K562 (cell line): ENCODE measurements at regions of chr16 and their contacts with region 1.

Region 1: DNA sequence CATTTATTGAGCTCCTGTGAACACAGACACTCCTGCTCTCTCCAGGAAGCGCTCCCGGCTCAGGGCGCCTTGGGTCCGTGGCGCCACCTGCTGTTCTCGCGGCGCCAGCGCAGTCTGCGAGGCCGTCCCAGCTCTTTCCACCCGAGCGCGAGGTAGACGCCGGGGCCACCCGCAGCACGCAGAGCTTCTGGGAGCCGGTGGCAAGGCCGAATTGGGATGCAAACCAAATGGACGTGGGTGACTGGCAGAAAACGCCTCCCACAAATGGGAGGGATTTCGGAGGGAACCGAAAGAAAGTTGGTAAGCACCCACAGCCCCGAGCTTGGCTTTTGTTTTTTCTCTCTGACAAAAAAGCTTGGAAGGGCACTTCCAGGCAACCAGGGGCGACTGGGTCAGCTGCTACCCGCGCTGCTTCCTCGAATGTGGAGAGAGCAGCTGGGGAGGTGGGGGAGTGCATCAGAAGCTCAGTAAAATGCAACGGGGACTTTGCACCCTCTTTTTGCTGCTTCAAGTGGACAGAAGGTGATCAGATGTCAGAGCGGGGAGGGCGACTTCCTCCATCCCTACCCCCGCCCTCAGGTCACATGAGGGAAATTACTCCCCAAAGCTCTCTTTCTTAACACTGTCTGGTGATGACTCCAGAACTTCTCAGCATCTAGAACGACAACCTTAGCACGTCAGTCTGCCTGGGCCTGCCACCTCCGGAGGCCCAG is 13.5 kb upstream of the N4BP1 start:
- DNase-seq: peak; percentile 81 to 86 (median 84)
- ATAC-seq: peak; percentile 99
- H3K4me3 ChIP-seq: peak overlapping the region; percentile 37
- H3K27ac ChIP-seq: no peak overlapping the region
- H3K4me1 ChIP-seq: peaks cover 0 to 16% of the 10 kb centered on the region in 2 experiments; a peak in 3 of 5 replicates
- H3K27me3 ChIP-seq: peaks cover 1 to 4% of the 10 kb centered on the region in 2 experiments; a peak in 3 of 5 replicates
- CTCF ChIP-seq: peak; percentile 94 to 97 (median 94)
- EP300 ChIP-seq: no peak
- POLR2A ChIP-seq: no peak
- RAD21 ChIP-seq: peak; percentile 84 to 94

Region 2: DNA sequence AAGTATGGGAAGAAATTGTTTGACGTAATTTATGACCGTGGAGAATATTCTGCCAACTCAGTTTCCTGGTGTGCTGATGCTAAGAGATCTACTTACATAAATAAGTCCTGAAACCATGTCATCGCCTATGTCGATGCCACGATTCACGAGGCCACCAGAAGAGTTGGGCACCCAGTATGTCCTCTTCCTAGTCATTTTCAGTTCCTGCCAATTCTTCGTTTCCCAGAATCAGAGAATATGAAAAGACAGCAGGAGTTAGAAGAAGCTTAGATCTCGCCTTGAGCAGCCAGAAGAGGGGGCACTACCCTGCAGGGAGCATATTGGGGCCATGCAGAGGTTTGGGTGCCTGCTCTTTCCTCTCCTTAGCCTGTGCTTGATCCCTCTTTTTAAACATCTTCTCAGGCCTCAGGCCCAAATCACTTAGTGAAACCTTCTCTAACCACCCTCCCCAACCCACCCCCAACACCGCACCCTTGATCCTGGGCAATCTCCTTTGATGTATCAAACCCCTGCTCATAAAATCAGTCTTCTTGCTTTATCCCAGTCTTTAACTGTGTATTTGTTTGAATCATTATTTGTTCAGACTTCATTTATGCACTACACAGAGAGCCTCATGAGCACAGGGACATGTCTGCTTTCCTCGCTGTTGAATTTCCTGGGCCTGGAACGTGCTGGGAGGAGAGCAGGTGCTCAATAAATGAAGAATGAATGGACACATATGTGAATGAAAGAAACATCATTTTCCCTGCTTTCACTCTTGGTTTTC is 391.6 kb before region 1 on chr16:
- CTCF ChIA-PET with region 1: no interaction called
- POLR2A ChIA-PET with region 1: no interaction called
- in situ Hi-C with region 1: loop called (anchors 10 kb)
- intact Hi-C with region 1: loop called (anchors 5 kb)
- DNase-seq: peak in 2 of 4 experiments; percentile 25 to 46
- ATAC-seq: peak; percentile 95
- H3K4me3 ChIP-seq: no peak overlapping the region
- H3K27ac ChIP-seq: no peak overlapping the region
- H3K4me1 ChIP-seq: no peaks in the 10 kb centered on the region
- H3K27me3 ChIP-seq: peaks cover 12 to 24% of the 10 kb centered on the region in 2 experiments
- CTCF ChIP-seq: peak; percentile 57 to 70 (median 59)
- EP300 ChIP-seq: no peak
- POLR2A ChIP-seq: no peak
- RAD21 ChIP-seq: peak; percentile 28 to 64; a peak in 2 of 4 replicates

Region 3: DNA sequence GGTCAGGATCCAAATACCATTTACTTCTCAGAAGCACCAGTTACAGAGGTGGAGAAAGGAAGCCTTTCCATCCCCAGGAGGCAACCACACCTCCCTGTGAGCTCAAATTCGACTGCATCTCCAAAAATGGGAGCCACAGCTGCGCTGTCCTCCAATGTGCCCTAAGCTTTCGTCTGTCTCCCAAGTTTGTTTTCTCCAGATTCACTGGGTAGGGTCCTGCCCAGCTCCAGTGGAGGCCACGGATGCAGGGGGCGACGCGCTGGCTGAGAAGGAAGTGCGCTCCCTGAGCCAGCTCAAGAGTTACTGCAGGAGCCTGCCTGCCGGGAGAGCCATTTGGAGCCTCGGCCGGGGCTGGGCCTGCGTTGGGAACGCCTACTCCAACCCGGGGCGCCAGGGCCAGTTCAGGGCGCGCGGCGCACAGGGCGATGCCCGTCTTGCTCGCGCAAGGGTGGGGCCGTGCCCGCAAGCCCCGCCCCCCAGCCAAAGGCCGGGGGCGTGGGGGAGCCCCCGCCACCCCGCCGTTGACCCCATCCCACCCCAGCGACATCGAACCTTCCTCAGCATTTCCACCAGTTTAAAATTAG is 257.8 kb before region 1 on chr16:
- CTCF ChIA-PET with region 1: no interaction called
- POLR2A ChIA-PET with region 1: interaction called, 3 read pairs
- in situ Hi-C with region 1: no loop called
- intact Hi-C with region 1: loop called (anchors 5 kb)
- DNase-seq: peak; percentile 86 to 93 (median 89)
- ATAC-seq: peak; percentile 98
- H3K4me3 ChIP-seq: peak overlapping the region; percentile 50
- H3K27ac ChIP-seq: peak overlapping the region; percentile 80
- H3K4me1 ChIP-seq: peaks cover 16 to 31% of the 10 kb centered on the region in 2 experiments
- H3K27me3 ChIP-seq: no peaks in the 10 kb centered on the region
- CTCF ChIP-seq: peak; percentile 14 to 27 (median 20); a peak in 2 of 6 replicates
- EP300 ChIP-seq: no peak
- POLR2A ChIP-seq: peak; percentile 80
- RAD21 ChIP-seq: no peak

Region 4: DNA sequence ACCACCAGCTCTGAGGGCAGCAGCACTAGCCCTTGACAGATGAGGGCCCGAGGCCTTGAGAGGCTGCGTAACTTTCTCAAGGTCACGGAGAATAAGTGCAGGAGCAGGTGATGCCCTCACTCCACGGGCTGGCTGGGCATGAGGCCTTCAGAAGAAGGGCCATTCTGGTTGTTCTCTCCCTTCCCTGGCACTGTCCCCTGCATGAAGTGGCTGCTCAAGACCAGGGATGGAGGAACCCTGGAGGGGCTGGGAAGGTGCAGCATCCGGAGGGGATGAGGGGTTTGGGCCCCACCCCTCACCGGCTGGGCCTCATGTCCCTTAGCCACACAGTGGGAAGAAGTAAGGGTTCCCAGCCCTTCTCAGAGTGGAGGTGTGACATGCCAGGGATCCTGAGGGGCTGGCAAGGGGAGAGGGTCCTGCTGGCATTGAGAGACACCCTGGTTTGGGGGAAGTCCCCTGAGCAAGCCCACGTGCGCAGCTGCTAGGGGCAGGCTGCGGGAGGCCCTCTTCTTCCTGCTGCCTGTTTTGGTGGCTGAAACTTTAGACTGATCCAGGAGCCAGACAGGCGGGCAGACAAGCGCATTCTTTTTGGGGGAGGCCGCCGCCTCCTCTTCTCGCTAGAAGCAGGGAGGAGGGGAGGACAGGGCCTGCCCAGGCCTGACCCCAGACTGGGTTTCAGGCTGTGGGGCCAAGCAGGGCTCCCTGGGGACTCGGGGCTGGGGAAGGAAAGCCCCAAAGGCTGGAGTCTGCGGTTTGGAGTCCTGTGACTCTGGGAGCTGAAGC is 87.4 kb before region 1 on chr16:
- CTCF ChIA-PET with region 1: interaction called, 3 read pairs
- POLR2A ChIA-PET with region 1: no interaction called
- in situ Hi-C with region 1: no loop called
- intact Hi-C with region 1: loop called (anchors 1 kb)
- DNase-seq: no peak
- ATAC-seq: no peak
- H3K4me3 ChIP-seq: no peak overlapping the region
- H3K27ac ChIP-seq: no peak overlapping the region
- H3K4me1 ChIP-seq: peaks cover 0 to 4% of the 10 kb centered on the region in 2 experiments; a peak in 2 of 5 replicates
- H3K27me3 ChIP-seq: peaks cover 3 to 13% of the 10 kb centered on the region in 2 experiments; a peak in 4 of 5 replicates
- CTCF ChIP-seq: no peak
- EP300 ChIP-seq: no peak
- POLR2A ChIP-seq: no peak
- RAD21 ChIP-seq: no peak